ENCODE measurements at regions of chr4 and their contacts with region 1.

Region 1: DNA sequence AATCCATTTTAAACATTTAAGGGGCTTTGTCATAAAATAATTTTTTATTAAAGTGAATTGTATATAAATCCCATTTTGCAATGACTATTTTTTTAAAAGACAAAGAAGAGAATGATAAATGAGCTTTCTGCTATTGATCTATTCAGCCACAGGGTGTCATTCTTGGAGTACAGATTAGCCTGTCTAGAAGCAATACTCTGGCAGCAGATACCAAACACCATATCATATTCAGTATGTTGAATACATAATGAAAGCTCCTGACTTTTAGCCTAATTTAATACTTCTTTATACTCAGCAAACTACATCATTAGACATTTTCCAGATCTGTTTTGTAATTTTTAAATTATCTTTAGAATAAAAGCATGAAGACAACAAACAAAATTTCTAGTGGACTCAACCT is 496.3 kb downstream of the PDGFC start:
- DNase-seq: peak; percentile 63

Region 2: DNA sequence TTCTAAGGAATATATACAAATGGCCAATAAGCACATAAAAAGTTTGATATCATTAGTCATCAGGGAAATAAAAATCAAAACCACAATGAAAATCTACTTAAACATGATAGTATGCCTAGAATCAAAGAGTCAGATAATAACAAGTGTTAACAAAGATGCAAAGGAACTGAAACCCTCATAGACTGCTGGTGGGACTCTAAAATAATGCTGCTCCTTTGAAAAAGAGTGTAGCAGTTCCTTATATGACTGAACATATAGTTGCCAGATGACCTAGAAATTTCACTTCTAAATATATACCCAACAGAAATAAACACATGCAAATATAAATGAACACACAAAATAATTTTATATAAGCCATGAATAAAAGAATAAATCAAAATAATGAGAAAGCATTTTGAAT is 316.6 kb before region 1 on chr4:
- in situ Hi-C with region 1: no loop called
- DNase-seq: no peak

Region 3: DNA sequence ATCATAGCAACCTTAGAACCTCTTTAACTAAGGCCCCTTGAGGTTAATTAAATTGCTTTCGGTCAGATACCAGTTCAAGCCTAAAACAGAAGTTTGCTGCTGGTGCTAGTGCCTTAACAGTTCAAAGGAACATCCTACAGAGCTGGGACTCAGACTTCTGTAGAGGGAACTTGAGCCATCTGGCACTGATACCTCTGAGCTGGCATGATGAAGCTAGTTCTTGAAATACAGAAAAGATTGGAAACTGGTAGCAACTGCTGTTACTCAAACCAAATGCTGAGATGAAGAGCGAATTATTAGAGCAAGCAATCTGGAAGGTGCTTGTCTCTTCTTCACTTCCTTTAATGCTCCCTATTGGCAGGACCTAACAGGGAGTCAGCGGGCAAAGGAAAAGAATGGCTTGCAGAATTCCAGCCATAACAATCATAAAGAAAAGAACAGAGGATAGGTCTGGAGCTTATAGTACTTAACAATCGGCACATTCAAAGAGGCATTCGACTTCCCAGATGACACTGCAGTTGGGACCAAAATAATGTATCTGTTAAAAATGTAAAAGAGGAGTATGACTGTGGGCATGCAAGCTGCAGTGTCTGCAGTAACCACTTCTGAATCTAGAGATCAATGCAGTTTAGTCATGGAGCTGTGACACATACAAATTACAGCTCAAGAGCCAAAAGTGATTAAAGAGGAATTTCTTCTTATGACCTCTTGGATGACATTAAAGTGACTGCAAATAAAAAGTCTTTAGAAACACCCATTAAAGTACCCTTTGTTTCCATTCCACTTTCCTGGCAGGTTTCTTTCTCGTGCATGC is 197.4 kb after region 1 on chr4:
- in situ Hi-C with region 1: loop called (anchors 25 kb)
- DNase-seq: no peak

Region 4: GRCh38 chr4:156734965-156735895 is 259.9 kb after region 1 on chr4:
- in situ Hi-C with region 1: no loop called
- DNase-seq: peak; percentile 45

Region 5: DNA sequence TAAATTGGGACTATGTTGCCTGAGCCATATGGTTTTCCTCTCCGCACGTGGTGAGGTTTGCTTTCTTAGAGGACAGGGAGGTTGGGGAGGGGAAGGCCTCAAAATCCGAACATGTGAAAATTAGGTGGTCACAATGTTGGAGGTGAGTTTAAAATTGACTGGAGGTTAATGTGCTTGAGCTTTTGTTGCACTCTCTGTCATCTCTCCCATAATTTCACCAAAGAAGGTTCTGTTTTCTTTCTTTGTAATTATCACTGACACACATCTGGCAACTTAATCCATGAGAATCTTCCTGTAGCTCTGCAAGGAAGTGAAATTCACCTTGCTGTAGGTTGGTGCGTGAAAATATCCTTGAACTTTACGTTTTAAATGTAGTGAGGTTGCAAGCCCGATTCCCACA is 270.8 kb after region 1 on chr4:
- in situ Hi-C with region 1: no loop called
- DNase-seq: no peak

Measured in KBM-7 (cell line).